Heart left ventricle (tissue), 16 donors: ENCODE measurements at regions of chr3 and their contacts with region 1.

Region 1: GRCh38 chr3:25427942-25428788 is at the start of gene RARB:
- DNase-seq: peak; percentile 72 to 85 (median 81)
- ATAC-seq: peak; percentile 85 to 95 (median 92)
- H3K4me3 ChIP-seq: peak within 1 kb of the TSS; percentile 55 to 78 (median 62)
- H3K27ac ChIP-seq: peak within 1 kb of the TSS; percentile 86 to 98 (median 93)
- H3K4me1 ChIP-seq: peaks cover 0 to 27% (median 13%) of the 10 kb centered on the region in 12 donors
- H3K27me3 ChIP-seq: peaks cover 0 to 9% (median 0%) of the 10 kb centered on the region in 9 donors
- CTCF ChIP-seq: no peak
- POLR2A ChIP-seq: peak; percentile 55 to 96
- total RNA-seq, gene RARB: 11.3 to 21.0 (median 17.3) TPM

Region 2: DNA sequence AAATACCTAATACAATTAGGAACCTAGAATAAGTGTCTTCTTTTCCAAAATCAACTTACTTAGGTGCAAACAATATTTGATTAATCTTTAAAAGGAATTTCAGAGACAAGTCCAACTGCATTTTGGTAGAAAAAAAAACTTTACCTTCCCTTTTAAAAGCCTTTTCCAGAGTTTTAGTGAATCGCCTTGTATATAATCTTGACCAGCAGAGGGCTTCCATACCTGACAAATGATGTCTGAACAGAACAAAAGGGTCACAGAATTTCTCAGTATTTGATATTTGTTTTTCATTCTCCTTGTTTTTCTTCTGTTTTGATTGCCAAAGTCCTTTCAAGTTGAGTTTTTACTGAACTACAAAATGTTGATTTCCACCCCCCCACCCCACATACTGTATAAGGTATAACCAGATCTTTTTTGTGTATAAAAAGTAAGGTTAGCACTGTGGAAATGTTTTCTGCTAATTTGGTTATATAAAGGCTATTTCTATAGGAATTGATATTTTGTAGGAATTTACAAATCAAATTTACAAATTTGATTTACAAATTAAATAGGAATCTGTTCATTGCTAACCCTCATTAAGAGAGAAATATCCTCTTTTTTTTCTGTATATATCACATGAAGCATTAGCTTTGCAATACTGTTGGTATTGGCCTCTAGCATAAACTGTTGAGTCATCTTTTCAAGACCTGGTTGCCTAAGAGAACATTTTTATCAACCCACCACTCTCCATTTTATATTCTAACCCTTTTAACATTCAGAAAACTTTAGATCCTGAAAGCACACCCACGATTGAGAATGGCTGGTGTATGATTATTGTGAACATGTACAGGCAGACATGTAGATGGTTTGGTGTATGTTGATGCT is 464.2 kb before region 1 on chr3:
- intact Hi-C with region 1: loop called in 2 of 10 experiments (anchors 10 kb)
- DNase-seq: no peak
- ATAC-seq: no peak
- H3K4me3 ChIP-seq: no peak overlapping the region
- H3K27ac ChIP-seq: no peak overlapping the region
- H3K4me1 ChIP-seq: no peaks in the 10 kb centered on the region
- H3K27me3 ChIP-seq: no peaks in the 10 kb centered on the region
- CTCF ChIP-seq: peak; percentile 33 to 68 (median 55)
- POLR2A ChIP-seq: no peak

Region 3: DNA sequence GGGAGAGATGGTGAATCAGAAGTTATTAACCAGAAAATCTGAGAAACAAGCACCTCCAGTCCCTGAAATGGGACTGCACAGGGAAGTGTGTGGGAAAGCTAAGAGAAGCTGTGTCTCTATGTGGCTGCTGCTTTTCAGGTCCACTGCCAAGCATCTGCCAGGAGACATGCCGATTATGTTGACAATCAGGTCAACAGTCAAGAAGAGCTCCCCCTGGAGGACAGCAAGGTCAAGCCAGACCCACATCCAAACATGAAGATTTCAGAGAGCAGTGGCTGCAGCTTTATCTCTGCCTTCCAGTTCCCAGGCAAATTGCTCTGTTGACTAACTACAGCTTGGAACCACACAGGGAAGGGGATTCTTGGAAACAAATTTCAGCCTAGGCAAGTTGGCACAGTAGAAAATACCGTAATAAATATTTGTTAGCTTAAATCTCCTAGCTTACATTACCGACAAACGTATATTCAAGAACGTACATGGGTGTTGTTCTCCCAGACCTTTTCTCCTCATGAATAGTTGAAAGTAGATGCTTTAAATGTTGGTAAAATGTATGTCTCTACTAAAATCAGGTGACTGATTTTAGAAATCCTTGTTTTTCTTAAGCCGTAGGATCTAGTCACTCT is 394.6 kb before region 1 on chr3:
- intact Hi-C with region 1: loop called in 3 of 10 experiments (anchors 5 to 10 kb)
- DNase-seq: peak in 4 of 5 donors; percentile 54 to 77 (median 62)
- ATAC-seq: peak; percentile 74 to 86 (median 82)
- H3K4me3 ChIP-seq: no peak overlapping the region
- H3K27ac ChIP-seq: no peak overlapping the region
- H3K4me1 ChIP-seq: peaks cover 0 to 20% (median 11%) of the 10 kb centered on the region in 12 donors
- H3K27me3 ChIP-seq: no peaks in the 10 kb centered on the region
- CTCF ChIP-seq: peak; percentile 55 to 74 (median 60)
- POLR2A ChIP-seq: no peak

Region 4: GRCh38 chr3:25094932-25095685 is 333.1 kb before region 1 on chr3:
- intact Hi-C with region 1: loop called in 1 of 10 experiments (anchors 10 kb)
- DNase-seq: no peak
- ATAC-seq: no peak
- H3K4me3 ChIP-seq: no peak overlapping the region
- H3K27ac ChIP-seq: no peak overlapping the region
- H3K4me1 ChIP-seq: peaks cover 0 to 1% (median 0%) of the 10 kb centered on the region in 12 donors
- H3K27me3 ChIP-seq: no peaks in the 10 kb centered on the region
- CTCF ChIP-seq: peak in 6 of 12 donors; percentile 6 to 40 (median 32)
- POLR2A ChIP-seq: no peak

Region 5: GRCh38 chr3:25324954-25325655 is 103.1 kb before region 1 on chr3:
- intact Hi-C with region 1: loop called in 1 of 10 experiments (anchors 10 kb)
- DNase-seq: peak in 2 of 5 donors; percentile 25 to 28
- ATAC-seq: peak; percentile 67 to 86 (median 82)
- H3K4me3 ChIP-seq: no peak overlapping the region
- H3K27ac ChIP-seq: peak overlapping the region in 1 of 12 donors; percentile 29
- H3K4me1 ChIP-seq: peaks cover 0 to 17% (median 3%) of the 10 kb centered on the region in 12 donors
- H3K27me3 ChIP-seq: no peaks in the 10 kb centered on the region
- CTCF ChIP-seq: no peak
- POLR2A ChIP-seq: no peak

Region 6: GRCh38 chr3:25455441-25456132 is 27.4 kb after region 1 on chr3:
- intact Hi-C with region 1: loop called in 1 of 10 experiments (anchors 2 kb)
- DNase-seq: peak in 4 of 5 donors; percentile 42 to 69 (median 56)
- ATAC-seq: peak; percentile 65 to 81 (median 74)
- H3K4me3 ChIP-seq: peak overlapping the region in 4 of 12 donors; percentile 19 to 34 (median 24)
- H3K27ac ChIP-seq: peak overlapping the region; percentile 43 to 81 (median 71)
- H3K4me1 ChIP-seq: peaks cover 3 to 90% (median 51%) of the 10 kb centered on the region in 12 donors
- H3K27me3 ChIP-seq: no peaks in the 10 kb centered on the region
- CTCF ChIP-seq: no peak
- POLR2A ChIP-seq: no peak

Region 7: GRCh38 chr3:25747033-25747432 is 318.9 kb after region 1 on chr3:
- intact Hi-C with region 1: no loop called
- DNase-seq: no peak
- ATAC-seq: no peak
- H3K4me3 ChIP-seq: no peak overlapping the region
- H3K27ac ChIP-seq: no peak overlapping the region
- H3K4me1 ChIP-seq: peaks cover 0 to 21% (median 0%) of the 10 kb centered on the region in 12 donors
- H3K27me3 ChIP-seq: no peaks in the 10 kb centered on the region
- CTCF ChIP-seq: no peak
- POLR2A ChIP-seq: no peak

Region 8: DNA sequence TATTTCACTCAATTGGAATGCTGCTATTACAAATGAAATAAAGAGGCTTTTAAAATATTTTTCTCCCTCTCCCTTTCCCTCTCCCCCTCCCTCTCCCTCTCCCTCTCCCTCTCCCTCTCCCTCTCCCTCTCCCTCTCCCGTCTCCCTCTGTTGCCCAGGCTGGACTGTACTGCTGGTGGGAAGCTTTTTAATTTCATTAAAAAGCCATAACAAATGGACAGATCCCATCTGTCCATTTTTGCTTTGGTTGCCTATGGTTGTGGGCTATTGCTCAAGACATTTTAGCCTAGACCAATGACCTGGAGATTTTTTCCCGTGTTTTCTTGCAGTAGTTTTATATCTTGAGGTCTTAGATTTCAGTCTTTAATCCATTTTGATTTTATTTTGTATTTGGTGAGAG is 1087.2 kb after region 1 on chr3:
- intact Hi-C with region 1: no loop called
- DNase-seq: no peak
- ATAC-seq: no peak
- H3K4me3 ChIP-seq: no peak overlapping the region
- H3K27ac ChIP-seq: no peak overlapping the region
- H3K4me1 ChIP-seq: no peaks in the 10 kb centered on the region
- H3K27me3 ChIP-seq: no peaks in the 10 kb centered on the region
- CTCF ChIP-seq: no peak
- POLR2A ChIP-seq: no peak